Prostate gland (tissue), 2 donors: ENCODE measurements at regions of chr10 and their contacts with region 1.

Region 1: DNA sequence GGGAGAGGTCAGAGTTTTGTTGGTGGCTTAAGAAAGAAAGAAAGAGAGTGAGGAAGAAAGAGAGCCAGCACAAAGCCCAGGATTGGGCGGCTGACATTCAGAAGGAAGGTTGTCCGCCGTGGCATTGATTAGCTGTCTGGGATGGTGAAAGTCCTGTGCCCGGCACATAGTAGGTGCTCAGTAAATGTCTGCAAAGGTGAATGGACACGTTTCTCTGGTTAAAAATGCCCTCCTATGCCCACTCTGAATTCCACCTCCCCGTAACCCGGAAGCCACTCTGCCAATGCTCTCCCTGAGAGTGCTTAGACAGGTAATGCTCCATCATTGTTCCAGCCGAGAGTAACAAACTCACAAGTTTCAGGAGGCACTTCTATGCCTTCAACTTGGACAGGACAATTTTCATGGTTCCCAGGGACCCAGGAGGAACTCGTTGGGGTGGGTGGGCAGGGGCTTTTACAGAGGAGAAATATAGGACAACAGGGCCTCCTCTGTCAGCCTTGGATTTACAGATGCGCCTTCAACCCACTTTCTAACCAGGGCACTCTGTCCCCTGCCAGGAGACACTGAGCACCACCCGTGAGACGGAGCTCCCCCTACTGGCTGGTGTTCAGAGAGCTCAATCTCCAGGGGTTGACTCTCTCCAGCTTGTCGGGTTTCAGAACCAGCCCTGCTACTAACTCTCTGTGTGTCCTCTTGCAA is 411.5 kb upstream of the ZMIZ1 start:
- DNase-seq: peak; percentile 79
- H3K4me3 ChIP-seq: no peak overlapping the region
- H3K27ac ChIP-seq: no peak overlapping the region
- H3K4me1 ChIP-seq: peaks cover 3% of the 10 kb centered on the region
- H3K27me3 ChIP-seq: no peaks in the 10 kb centered on the region
- CTCF ChIP-seq: peak; percentile 32 to 75 (median 70)
- POLR2A ChIP-seq: no peak

Region 2: DNA sequence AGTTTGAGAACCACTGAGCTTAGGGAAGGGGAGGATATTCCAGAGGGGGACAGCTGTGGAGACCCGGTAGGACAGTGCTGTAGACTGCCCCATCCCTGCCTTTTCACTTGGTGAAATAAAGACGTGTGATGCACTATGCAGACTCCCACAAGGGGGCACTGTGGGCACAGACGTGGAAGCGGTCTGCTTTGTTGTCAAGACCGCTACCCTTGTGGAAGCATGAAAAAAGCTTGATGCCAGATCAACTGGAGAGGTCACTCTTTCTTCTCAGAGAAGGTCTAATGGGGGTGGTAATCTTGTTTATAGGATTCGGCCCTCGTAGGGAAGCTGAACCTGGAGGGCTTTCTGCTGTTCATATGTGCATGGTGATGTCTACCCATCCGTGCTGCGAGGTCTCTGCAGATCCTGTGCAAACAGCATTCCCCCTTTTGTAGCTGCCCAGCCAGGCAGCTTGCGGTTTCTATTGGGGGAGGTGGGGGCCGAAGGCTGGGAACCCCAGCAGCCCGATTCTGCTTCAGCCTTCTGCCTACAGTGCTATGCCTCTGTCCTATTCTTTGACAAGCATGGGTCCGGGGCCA is 609.9 kb before region 1 on chr10:
- intact Hi-C with region 1: loop called (anchors 10 kb)
- DNase-seq: peak; percentile 85
- H3K4me3 ChIP-seq: no peak overlapping the region
- H3K27ac ChIP-seq: no peak overlapping the region
- H3K4me1 ChIP-seq: no peaks in the 10 kb centered on the region
- H3K27me3 ChIP-seq: no peaks in the 10 kb centered on the region
- CTCF ChIP-seq: peak; percentile 84 to 90 (median 87)
- POLR2A ChIP-seq: no peak

Region 3: DNA sequence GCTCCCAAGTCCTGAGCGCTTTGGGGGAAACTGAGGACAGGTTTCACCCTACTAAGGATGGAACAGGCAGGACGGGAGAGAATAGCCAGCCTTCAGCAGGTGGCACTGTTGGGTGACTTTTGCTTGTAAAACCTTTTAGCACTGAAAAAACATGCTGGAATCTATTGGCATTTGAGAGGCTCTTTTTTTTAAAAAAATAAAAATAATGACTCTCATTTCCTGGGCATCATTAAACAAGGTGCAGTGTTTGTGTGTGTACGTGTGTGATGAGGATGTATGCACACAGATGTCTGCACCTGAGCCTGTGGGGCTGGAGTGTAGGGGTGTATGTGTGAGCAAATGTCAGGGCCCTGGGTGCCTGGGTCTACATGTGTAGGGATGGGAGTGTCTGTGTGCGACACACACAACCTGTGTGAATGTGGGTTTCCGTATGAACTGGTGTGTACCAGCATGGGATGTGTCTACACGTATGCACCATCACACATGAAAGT is 445.7 kb before region 1 on chr10:
- intact Hi-C with region 1: loop called (anchors 5 kb)
- DNase-seq: peak; percentile 25
- H3K4me3 ChIP-seq: no peak overlapping the region
- H3K27ac ChIP-seq: no peak overlapping the region
- H3K4me1 ChIP-seq: no peaks in the 10 kb centered on the region
- H3K27me3 ChIP-seq: no peaks in the 10 kb centered on the region
- CTCF ChIP-seq: peak; percentile 18 to 64 (median 48)
- POLR2A ChIP-seq: no peak

Region 4: GRCh38 chr10:78302989-78303854 is 354.1 kb before region 1 on chr10:
- intact Hi-C with region 1: loop called (anchors 10 kb)
- DNase-seq: peak; percentile 90
- H3K4me3 ChIP-seq: peak overlapping the region; percentile 48 to 54
- H3K27ac ChIP-seq: peak overlapping the region; percentile 84 to 87
- H3K4me1 ChIP-seq: peaks cover 4% of the 10 kb centered on the region
- H3K27me3 ChIP-seq: no peaks in the 10 kb centered on the region
- CTCF ChIP-seq: peak; percentile 54 to 91 (median 77)
- POLR2A ChIP-seq: peak; percentile 71

Region 5: DNA sequence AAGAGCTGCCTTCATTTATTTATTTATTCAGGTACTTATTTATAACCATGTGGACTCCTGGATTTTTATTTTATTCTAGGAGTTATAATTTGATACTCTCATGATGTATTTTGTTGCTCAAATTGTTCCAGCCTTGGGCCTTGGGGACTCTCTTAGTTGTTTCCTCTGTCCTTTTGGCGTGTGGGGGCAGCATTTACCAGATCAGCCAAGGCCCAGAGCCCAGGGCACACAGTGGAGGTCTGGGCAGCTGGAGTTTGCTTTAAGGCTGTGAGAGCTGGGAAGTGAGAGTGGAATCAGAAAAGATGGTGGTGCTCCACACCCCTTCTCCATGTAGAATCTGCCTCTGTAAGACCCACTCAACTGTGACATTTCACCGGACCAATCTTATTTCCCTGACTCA is 224.7 kb before region 1 on chr10:
- intact Hi-C with region 1: loop called (anchors 5 kb)
- DNase-seq: no peak
- H3K4me3 ChIP-seq: no peak overlapping the region
- H3K27ac ChIP-seq: peak overlapping the region; percentile 44 to 45
- H3K4me1 ChIP-seq: peaks cover 4% of the 10 kb centered on the region
- H3K27me3 ChIP-seq: no peaks in the 10 kb centered on the region
- CTCF ChIP-seq: peak in 1 of 4 experiments; percentile 6
- POLR2A ChIP-seq: no peak